ENCODE measurements at regions of chr16 and their contacts with region 1.

Region 1: GRCh38 chr16:75787440-75787839 is 61.1 kb upstream of the CPHXL start:
- H3K4me3 ChIP-seq: no peak overlapping the region
- H3K27ac ChIP-seq: no peak overlapping the region
- H3K4me1 ChIP-seq: no peaks in the 10 kb centered on the region
- CTCF ChIP-seq: no peak

Region 2: GRCh38 chr16:75764154-75764768 is 23.2 kb before region 1 on chr16:
- CTCF ChIA-PET with region 1: no interaction called
- POLR2A ChIA-PET with region 1: no interaction called
- H3K4me3 ChIP-seq: no peak overlapping the region
- H3K27ac ChIP-seq: no peak overlapping the region
- H3K4me1 ChIP-seq: no peaks in the 10 kb centered on the region
- CTCF ChIP-seq: peak; percentile 64; the same call in 1 of the 2 replicates

Region 3: GRCh38 chr16:76653390-76654026 is 866.1 kb after region 1 on chr16:
- CTCF ChIA-PET with region 1: interaction called, 14 read pairs
- POLR2A ChIA-PET with region 1: no interaction called
- H3K4me3 ChIP-seq: no peak overlapping the region
- H3K27ac ChIP-seq: no peak overlapping the region
- H3K4me1 ChIP-seq: no peaks in the 10 kb centered on the region
- CTCF ChIP-seq: no peak